ENCODE measurements at regions of chr2 and their contacts with region 1.

Region 1: DNA sequence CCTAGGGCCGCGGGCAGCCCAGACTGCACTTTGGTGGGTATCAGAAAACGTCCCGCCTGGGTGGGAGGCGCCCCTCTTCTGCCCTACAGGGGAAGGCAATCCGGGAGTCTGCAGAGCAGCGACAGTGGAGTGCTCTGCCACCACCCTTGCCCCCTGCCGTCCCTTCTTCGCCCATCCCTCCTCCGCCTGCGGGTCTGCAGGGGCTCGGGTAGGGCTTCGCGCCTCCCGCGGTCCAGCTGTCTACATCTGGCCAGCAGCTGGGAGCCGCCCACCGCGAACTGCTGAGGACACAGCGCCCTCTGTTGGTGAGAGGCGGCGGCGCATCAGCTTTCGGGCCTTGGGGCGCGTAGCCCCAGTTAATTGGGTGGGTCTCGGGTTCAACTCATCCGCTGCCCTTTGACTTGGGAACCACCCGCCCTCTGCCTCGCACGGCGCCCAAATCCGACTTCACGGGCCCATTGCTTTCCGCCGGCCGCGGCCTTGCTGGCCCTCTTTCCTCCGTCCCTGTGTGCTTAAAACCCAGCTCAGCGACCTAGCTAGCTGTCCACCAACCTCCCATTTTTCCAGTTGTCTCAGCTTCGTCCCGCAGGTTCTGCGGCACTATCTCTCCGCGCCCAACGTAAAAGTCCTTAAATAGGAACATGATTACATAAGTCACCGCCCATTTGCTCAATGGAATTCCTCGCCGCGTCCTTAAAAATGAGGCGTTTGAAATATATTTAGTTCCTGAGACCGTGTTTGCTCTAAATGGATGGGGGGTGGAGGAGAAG is 17.6 kb downstream of the WNT10A start:
- DNase-seq: peak; percentile 79 to 85
- ATAC-seq: peak; percentile 17 to 58 (median 24)
- H3K4me3 ChIP-seq: no peak overlapping the region
- H3K4me3 Mint-ChIP-seq: peak overlapping the region; percentile 81
- H3K27ac ChIP-seq: no peak overlapping the region
- H3K27ac Mint-ChIP-seq: peak overlapping the region; percentile 76 to 90
- H3K4me1 ChIP-seq: peaks cover 53% of the 10 kb centered on the region
- H3K4me1 Mint-ChIP-seq: peaks cover 42 to 46% of the 10 kb centered on the region in 2 donors
- H3K27me3 ChIP-seq: peaks cover 24% of the 10 kb centered on the region
- H3K27me3 Mint-ChIP-seq: peaks cover 54 to 60% of the 10 kb centered on the region in 2 donors
- CTCF ChIP-seq: peak; percentile 100

Region 2: GRCh38 chr2:217993817-217994463 is 904.4 kb before region 1 on chr2:
- intact Hi-C with region 1: no loop called
- DNase-seq: peak; percentile 50 to 65
- ATAC-seq: peak; percentile 60 to 86 (median 64)
- H3K4me3 ChIP-seq: no peak overlapping the region
- H3K4me3 Mint-ChIP-seq: no peak overlapping the region
- H3K27ac ChIP-seq: no peak overlapping the region
- H3K27ac Mint-ChIP-seq: no peak overlapping the region
- H3K4me1 ChIP-seq: no peaks in the 10 kb centered on the region
- H3K4me1 Mint-ChIP-seq: no peaks in the 10 kb centered on the region
- H3K27me3 ChIP-seq: no peaks in the 10 kb centered on the region
- H3K27me3 Mint-ChIP-seq: peaks cover 3 to 26% of the 10 kb centered on the region in 2 donors
- CTCF ChIP-seq: peak; percentile 68

Region 3: GRCh38 chr2:218216674-218217359 is 681.5 kb before region 1 on chr2 and contains the start of gene ARPC2:
- intact Hi-C with region 1: loop called (anchors 5 kb)
- DNase-seq: peak; percentile 97 to 98
- ATAC-seq: peak; percentile 81 to 92 (median 87)
- H3K4me3 ChIP-seq: peak within 1 kb of the TSS; percentile 100
- H3K4me3 Mint-ChIP-seq: peak within 1 kb of the TSS; percentile 96
- H3K27ac ChIP-seq: peak within 1 kb of the TSS; percentile 100
- H3K27ac Mint-ChIP-seq: peak within 1 kb of the TSS; percentile 98 to 99
- H3K4me1 ChIP-seq: peaks cover 31% of the 10 kb centered on the region
- H3K4me1 Mint-ChIP-seq: peaks cover 46 to 48% of the 10 kb centered on the region in 2 donors
- H3K27me3 ChIP-seq: no peaks in the 10 kb centered on the region
- H3K27me3 Mint-ChIP-seq: no peaks in the 10 kb centered on the region
- CTCF ChIP-seq: no peak
- total RNA-seq, gene ARPC2: 824 to 880 (median 830) TPM

Region 4: DNA sequence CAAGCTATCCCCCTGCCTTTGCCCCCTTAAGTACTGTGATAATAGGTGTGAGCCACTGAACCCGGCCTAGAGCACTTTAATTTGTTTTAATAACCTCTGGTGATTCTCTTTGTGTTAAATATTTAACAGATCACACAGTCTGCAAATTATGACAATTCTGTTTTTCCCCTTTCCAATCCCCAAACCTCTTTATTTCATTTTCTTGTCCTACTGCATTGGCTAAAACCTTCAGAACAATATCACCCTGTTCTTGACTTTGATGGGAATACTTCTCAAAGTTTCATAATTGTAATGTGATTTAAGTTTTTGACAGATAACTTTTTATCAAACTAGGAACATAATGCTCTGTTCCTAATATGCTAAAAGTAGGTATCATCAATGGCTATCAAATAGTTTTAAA is 374.6 kb before region 1 on chr2:
- intact Hi-C with region 1: no loop called
- DNase-seq: no peak
- ATAC-seq: no peak
- H3K4me3 ChIP-seq: no peak overlapping the region
- H3K4me3 Mint-ChIP-seq: no peak overlapping the region
- H3K27ac ChIP-seq: no peak overlapping the region
- H3K27ac Mint-ChIP-seq: no peak overlapping the region
- H3K4me1 ChIP-seq: no peaks in the 10 kb centered on the region
- H3K4me1 Mint-ChIP-seq: no peaks in the 10 kb centered on the region
- H3K27me3 ChIP-seq: no peaks in the 10 kb centered on the region
- H3K27me3 Mint-ChIP-seq: no peaks in the 10 kb centered on the region
- CTCF ChIP-seq: no peak

Region 5: DNA sequence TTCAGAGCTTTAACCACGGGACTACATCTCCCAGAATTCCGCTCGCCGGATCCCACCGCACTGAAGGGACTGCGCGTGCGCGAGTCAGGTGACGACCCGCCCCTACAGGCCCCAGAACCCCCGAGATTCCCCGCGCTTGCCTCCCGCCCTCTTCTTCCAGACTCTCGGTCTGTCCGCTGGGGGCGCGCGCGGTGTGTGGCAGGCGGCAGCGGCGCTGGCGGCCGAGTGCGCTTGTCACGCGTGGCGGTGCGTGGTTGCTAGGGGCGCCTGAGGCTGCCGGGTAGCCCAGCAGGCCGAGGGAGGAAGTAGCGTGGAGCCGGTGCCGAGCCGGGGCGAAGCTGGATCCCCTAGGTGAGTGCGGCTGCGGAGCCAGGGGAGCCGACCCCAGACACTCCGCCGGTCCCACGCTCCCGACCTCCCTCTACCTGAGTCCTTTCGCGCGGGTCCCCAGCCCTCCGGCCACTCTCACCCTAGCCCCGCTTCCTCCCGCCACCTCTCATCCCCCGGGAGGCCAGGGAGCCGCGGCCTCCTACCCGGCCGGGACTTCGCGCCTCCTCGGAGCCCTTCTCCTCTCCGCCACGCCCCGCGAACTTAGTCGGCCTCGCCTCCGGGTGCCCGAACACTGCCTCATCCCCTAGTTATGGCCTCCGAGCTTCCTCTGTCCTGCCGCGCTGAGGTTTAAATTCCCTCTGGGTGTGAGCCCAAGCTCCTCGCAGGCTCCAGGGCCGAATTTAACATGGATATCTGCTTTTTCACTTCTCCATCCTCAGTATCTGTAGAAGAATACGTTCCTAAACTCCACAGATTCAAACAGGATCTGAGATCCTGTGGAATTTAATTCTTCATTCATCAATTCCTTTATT is 187.4 kb before region 1 on chr2 and contains the start of gene TTLL4:
- intact Hi-C with region 1: loop called (anchors 5 kb)
- DNase-seq: peak; percentile 98 to 99
- ATAC-seq: peak; percentile 98 to 100 (median 98)
- H3K4me3 ChIP-seq: peak within 1 kb of the TSS; percentile 76
- H3K4me3 Mint-ChIP-seq: peak within 1 kb of the TSS; percentile 99
- H3K27ac ChIP-seq: peak within 1 kb of the TSS; percentile 78
- H3K27ac Mint-ChIP-seq: peak within 1 kb of the TSS; percentile 94 to 97
- H3K4me1 ChIP-seq: peaks cover 10% of the 10 kb centered on the region
- H3K4me1 Mint-ChIP-seq: peaks cover 12 to 27% of the 10 kb centered on the region in 2 donors
- H3K27me3 ChIP-seq: no peaks in the 10 kb centered on the region
- H3K27me3 Mint-ChIP-seq: no peaks in the 10 kb centered on the region
- CTCF ChIP-seq: peak; percentile 89
- total RNA-seq, gene TTLL4: 20.2 to 25.5 (median 22.8) TPM

Region 6: GRCh38 chr2:218876562-218877219 is 21.6 kb before region 1 on chr2:
- intact Hi-C with region 1: loop called (anchors 1 kb)
- DNase-seq: peak; percentile 64 to 88
- ATAC-seq: peak in 2 of 3 donors; percentile 26 to 33
- H3K4me3 ChIP-seq: no peak overlapping the region
- H3K4me3 Mint-ChIP-seq: no peak overlapping the region
- H3K27ac ChIP-seq: no peak overlapping the region
- H3K27ac Mint-ChIP-seq: no peak overlapping the region
- H3K4me1 ChIP-seq: peaks cover 44% of the 10 kb centered on the region
- H3K4me1 Mint-ChIP-seq: peaks cover 0 to 31% of the 10 kb centered on the region in 2 donors
- H3K27me3 ChIP-seq: peaks cover 37% of the 10 kb centered on the region
- H3K27me3 Mint-ChIP-seq: peaks cover 47 to 56% of the 10 kb centered on the region in 2 donors
- CTCF ChIP-seq: peak; percentile 98

Region 7: GRCh38 chr2:219133976-219134375 is 235.7 kb after region 1 on chr2:
- intact Hi-C with region 1: no loop called
- DNase-seq: no peak
- ATAC-seq: peak in 1 of 3 donors; percentile 35
- H3K4me3 ChIP-seq: no peak overlapping the region
- H3K4me3 Mint-ChIP-seq: no peak overlapping the region
- H3K27ac ChIP-seq: no peak overlapping the region
- H3K27ac Mint-ChIP-seq: no peak overlapping the region
- H3K4me1 ChIP-seq: no peaks in the 10 kb centered on the region
- H3K4me1 Mint-ChIP-seq: peaks cover 5% of the 10 kb centered on the region in 2 donors
- H3K27me3 ChIP-seq: no peaks in the 10 kb centered on the region
- H3K27me3 Mint-ChIP-seq: no peaks in the 10 kb centered on the region
- CTCF ChIP-seq: no peak

Region 8: DNA sequence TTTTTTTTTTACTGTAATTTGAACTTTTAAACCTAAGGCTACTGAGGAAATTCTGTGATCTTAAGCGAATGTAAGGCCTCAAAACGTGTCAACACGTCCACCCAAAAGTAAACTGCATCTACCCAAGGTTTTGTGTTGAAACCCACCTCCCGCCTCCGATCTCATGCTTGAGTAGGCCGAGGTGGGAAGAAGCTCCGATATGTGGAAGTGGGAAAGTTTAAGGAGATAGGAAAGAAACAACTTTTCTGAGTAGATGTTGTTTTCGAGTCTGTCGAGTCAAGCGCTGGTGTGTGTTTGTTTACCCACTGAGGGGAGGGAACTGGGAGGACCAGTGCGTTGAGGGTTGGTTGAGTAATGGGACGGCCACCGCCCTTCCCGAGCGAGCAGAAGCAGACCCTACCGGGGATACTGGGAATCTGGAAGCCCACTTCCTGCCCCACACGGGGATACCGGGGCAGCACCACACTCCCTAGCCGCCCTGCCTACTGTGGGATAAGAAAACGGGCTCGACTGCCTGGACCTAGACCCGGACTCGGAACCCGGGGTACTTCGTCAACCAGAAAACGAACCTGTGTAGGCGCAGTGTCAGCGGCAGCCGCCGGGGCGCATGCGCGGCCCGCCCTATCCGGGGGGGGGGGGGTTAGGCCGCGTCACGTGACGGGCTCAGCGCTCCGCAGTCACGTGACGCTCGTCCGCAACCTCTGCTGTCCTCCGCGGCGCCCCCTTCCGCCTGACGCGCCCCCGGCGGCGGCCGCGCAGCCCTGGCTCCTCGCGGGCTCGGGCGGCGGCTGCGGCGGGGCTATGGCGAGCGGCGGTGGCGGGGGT is 279.5 kb after region 1 on chr2 and contains the start of gene RETREG2:
- intact Hi-C with region 1: loop called (anchors 5 kb)
- DNase-seq: peak; percentile 79 to 96
- ATAC-seq: peak; percentile 57 to 71 (median 63)
- H3K4me3 ChIP-seq: peak within 1 kb of the TSS; percentile 61
- H3K4me3 Mint-ChIP-seq: peak within 1 kb of the TSS; percentile 97
- H3K27ac ChIP-seq: peak within 1 kb of the TSS; percentile 98
- H3K27ac Mint-ChIP-seq: peak within 1 kb of the TSS; percentile 99 to 100
- H3K4me1 ChIP-seq: peaks cover 43% of the 10 kb centered on the region
- H3K4me1 Mint-ChIP-seq: peaks cover 47 to 67% of the 10 kb centered on the region in 2 donors
- H3K27me3 ChIP-seq: no peaks in the 10 kb centered on the region
- H3K27me3 Mint-ChIP-seq: no peaks in the 10 kb centered on the region
- CTCF ChIP-seq: peak; percentile 38
- total RNA-seq, gene RETREG2: 77.0 to 81.9 (median 79.0) TPM